Posterior cingulate gyrus (tissue), 11 donors: ENCODE measurements at regions of chr11 and their contacts with region 1.

Region 1: GRCh38 chr11:114159802-114160632 is 100.5 kb downstream of the ZBTB16 start:
- DNase-seq: peak; percentile 75 to 98 (median 86)

Region 2: DNA sequence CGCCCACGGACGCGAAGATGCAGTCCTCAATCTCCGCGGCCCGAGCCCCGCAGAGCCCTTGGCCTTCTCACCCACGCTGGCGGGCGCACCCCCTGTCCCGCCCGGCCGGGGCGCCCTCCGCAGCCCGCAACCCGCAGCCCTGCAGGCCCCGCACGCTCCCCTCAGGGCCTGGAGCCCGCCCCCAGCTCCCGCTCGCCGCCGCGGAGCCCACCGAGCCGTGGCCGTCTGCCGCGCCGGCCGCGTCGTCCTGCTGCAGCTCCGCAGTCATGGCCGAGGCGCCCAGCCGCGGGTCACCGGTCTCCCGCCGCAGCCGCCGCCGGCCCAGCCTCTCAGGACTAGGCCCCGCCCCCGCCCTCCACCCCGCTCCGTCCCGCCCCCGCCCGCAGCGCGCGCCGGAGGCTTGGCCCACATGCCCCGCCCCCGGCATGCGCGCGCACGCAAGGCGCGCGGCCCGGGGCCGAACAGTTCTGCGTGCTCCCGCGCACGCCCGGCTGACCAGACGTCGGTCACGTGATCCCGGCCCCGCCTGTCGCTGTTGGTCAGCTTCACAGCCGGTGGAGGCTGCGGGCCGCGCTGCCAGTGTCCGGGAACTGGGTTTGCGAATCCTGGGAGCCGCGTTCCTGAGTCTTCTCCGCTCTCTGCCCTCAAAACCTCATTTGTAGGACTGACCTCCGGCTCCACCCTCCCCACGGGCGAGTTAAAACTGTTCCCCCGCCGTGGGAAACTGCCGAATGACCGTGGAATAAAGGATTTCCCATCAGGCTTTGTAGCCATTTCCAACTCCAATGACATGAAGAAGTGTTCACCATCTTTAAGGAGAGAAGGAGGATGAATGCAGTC is 284.6 kb before region 1 on chr11 and contains the start of gene USP28:
- intact Hi-C with region 1: loop called (anchors 10 kb)
- DNase-seq: peak; percentile 95 to 100 (median 98)

Region 3: GRCh38 chr11:114075891-114076441 is 84.1 kb before region 1 on chr11:
- intact Hi-C with region 1: loop called (anchors 5 kb)
- DNase-seq: peak in 5 of 10 donors; percentile 50 to 91 (median 83)

Region 4: DNA sequence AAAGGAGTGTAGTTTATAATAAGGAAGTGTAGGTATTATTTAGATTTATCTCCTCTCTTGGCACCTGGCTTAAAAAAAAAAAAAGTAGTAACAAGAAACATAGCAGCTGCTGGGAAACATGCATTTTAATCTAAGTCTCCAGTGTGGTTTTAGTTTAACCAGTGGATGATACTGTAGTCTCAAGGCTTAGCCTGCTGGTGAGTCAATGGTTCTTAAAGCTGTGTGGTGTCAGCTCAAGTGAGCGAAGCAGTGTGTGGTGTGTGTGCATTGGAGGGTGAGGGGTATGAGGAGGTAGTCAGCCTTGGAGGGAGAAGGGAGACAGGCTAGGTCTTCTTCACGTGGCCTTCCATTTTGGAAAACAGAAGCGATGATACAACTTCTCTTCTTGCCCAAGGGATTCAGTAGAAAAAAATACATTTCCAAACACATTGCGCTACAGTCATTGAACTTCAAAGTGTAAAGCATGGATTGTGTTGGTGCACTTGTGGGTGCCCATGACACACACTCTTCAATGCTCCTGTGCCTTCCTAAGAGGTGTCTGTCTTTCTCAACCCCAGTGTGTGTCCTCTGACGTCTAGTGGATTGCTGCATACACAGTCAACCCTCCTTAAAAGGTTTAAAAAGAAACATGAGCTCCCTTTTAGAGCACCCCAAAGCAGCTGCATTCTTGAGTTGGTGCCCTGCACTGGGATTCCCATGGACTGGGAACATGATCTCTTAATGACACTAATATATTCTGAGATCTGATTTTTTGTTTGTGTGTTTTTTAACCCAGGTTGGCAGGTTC is 60.4 kb before region 1 on chr11:
- intact Hi-C with region 1: no loop called
- DNase-seq: no peak